HEK293T (cell line): ENCODE measurements at regions of chr19 and their contacts with region 1.

Region 1: DNA sequence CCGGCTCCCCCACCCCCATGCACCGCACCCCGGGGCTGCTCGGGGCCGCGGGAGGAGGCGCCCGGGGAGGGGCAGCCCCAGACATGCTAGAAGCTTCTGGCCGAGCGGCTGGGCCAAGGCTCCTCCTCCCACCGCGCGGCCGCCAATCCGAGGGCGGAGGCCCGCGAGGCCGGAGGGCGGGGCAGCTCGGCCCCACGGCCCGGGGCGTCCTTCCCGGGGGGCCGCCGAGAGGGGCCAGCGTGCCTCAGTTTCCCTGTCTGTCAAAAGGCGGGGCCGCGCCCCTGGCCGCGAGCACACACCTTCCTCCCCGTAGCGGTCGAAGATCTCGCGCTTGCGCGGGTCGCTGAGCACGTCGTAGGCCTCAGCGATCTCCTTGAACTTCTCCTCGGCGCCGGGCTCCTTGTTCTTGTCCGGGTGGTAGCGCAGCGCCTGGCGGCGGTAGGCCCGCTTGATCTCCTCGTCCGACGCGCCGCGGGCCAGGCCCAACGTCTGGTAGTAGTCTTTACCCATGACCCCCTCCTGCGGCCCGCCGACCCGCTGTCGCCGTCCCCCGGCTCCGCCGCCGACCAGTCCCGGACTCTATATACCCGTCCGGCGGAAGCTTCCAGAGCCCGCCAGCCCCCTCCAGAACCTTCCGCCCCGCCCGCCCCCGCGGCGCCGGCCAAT is at the start of gene DNAJB1:
- DNase-seq: peak; percentile 69

Region 2: DNA sequence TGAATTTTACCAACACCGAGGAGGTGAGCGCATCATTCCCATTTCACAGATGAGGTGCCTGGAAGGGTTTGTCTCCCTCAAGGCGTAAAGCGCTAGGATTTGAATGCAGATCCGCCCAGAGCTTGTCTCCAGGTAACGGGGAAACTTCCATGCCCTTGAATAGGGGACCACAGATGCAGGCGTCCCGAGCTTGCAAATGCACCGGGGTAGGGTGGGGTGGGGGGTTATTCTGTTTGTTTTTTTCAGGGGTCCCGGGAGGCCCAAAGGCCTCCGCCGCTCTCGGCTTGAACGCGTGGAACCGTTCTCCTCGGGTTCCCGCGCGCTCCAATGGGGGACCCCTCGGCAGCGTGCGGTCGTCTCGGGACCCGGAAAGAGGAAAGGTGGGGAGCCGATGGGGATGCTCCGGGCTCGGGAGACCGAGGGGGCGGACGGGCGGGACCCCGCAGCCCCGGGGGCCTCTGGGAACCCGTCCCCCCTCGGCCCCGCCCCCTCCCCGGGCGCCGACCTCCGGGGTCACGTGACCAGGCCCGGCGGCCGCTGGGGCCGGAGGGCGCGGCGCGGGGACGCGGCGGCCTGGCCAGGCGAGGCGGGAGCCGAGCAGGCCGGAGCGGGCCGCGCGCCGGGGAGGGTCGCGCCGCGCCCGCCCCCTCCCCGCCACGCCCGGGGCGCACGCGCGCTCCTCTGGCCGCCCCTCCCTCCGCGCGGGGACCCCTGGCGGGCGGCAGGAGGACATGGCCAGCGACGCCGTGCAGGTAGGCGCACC is 85.0 kb before region 1 on chr19 and contains the start of gene PKN1:
- CTCF ChIA-PET with region 1: no interaction called
- POLR2A ChIA-PET with region 1: no interaction called
- DNase-seq: peak; percentile 82

Region 3: DNA sequence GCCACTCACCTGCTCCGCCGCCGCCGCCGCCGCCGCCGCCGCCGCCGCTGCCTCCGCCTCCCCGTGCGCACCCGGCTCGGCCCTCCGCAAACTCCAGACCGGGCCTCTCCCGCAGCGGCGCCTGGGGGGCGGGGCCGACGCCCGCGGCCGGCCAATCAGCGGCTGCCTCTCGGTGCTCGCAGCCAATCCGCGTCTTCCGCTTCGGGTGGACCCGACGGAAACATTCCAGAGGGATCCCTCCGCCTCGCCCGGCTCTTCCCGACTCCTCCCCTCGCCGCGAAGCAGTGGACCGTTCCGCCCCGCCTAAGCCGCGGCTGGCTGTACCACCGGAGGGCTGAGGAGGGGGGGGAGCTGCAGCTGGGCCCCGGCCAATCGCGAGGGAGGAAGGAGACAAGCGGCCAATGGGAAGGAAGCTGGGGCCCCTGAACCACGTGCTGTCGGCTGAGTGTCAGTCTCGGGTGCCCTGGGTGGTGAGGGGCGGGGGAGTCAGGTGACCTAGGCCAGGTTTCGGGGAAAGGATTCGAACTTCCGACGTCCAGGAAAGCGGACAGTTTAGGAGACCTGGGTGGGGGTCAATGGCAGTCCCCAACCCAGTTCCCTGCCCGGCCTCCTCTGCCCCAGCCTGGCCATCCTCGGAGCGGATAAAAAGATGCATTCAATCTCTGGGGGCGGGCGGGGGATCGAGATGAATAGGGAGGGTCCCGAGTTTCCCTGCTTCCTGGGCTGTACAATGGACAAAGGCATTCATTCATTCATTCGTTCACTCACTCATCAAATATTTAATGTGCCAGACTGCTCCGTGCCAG is 21.7 kb before region 1 on chr19 and contains the start of gene GIPC1:
- CTCF ChIA-PET with region 1: no interaction called
- POLR2A ChIA-PET with region 1: interaction called, 27 read pairs
- DNase-seq: peak; percentile 99

Region 4: GRCh38 chr19:14505488-14506432 is 12.2 kb before region 1 on chr19:
- CTCF ChIA-PET with region 1: interaction called, 7 read pairs
- POLR2A ChIA-PET with region 1: interaction called, 53 read pairs
- DNase-seq: peak; percentile 90

Region 5: GRCh38 chr19:14536926-14537692 is 19.1 kb after region 1 on chr19:
- CTCF ChIA-PET with region 1: no interaction called
- POLR2A ChIA-PET with region 1: interaction called, 20 read pairs
- DNase-seq: peak; percentile 84